Transverse colon (tissue), 4 donors: ENCODE measurements at regions of chr16 and their contacts with region 1.

Region 1: DNA sequence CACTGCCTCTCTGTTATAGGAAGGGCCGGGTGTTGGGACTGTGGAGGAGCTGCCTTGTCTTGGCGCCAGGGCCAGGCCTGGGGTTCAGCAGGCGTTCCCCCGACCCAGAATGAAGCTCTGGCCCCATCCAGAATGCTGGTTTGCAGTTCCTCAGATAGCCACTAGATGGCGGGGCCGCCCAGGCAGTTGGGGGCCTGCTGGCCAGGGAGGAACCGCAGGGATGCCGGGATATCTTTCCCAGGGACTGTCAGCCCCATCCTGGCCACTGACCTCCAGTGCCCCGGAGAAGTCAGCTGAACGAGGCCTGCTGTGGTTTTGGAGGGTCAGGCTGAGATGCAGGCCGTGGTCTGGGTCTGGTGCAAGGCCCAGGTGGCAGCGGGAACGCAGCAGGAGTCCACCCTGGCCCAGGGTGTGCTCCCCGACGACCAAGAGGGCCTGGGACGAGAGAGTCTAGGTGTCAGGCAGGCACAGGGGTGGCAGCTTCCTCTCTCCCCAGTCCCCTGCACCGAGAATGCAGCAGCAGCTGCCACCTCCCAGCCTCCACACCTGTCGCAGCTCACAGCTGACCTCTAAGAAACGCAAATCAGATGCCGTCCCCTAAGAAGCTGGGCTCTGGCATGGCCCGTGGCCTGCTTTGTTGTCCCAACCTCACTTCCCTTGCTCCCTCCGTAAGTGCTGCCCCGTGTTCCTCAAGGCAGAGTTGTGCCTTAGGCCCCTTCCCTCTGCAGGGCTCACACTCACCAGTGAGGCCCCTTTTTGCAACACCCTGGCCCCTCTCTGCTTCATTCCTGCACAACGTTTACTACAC is 51.2 kb downstream of the RMI2 start:
- DNase-seq: peak; percentile 68
- H3K4me3 ChIP-seq: no peak overlapping the region
- H3K27ac ChIP-seq: no peak overlapping the region
- H3K4me1 ChIP-seq: no peaks in the 10 kb centered on the region
- H3K27me3 ChIP-seq: no peaks in the 10 kb centered on the region
- CTCF ChIP-seq: peak; percentile 96 to 99 (median 99)
- EP300 ChIP-seq: no peak
- POLR2A ChIP-seq: no peak

Region 2: GRCh38 chr16:11121914-11122692 is 274.3 kb before region 1 on chr16:
- in situ Hi-C with region 1: no loop called
- intact Hi-C with region 1: no loop called
- DNase-seq: no peak
- H3K4me3 ChIP-seq: no peak overlapping the region
- H3K27ac ChIP-seq: peak overlapping the region in 1 of 4 donors; percentile 22
- H3K4me1 ChIP-seq: peaks cover 0 to 7% (median 0%) of the 10 kb centered on the region in 4 donors
- H3K27me3 ChIP-seq: no peaks in the 10 kb centered on the region
- CTCF ChIP-seq: no peak
- EP300 ChIP-seq: no peak
- POLR2A ChIP-seq: no peak

Region 3: DNA sequence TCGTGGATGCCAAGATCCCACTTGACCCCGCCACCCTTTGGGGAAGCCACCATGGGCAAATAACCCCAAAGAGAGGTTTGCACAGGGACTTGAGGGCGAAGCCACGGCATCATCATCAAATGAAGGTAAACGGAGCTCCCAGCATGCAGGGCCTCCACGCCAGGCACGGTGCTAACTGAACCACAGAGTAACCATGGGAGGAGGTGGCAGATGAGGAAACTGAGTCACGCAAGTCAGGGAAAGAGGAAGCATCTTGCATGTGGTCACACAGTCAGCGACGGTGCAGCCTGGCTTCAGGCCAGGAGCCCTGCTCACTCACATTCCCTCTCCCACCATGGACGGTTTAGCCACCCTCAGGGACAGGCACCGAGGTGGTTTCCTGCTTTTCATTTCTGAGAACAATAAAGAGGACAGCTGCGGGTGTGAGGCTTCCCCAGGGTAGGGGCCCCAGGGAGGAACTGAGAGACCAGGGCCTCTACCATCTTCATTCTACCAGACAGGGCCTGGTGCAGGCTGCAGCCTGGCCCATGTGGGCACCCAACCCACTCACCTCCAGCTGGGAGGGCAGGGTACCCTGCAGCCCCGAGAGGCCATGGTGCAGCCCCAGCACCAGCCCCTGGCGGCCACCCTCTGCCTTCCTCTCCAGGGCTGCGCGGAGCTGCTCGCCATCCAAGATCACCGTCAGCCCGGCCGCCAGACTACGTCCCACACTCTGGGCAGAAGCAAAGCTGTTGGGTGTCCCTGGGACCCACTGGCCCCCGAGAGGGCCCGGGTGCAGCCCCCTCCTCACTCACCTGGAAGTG is 27.1 kb after region 1 on chr16:
- in situ Hi-C with region 1: no loop called
- intact Hi-C with region 1: no loop called
- DNase-seq: no peak
- H3K4me3 ChIP-seq: no peak overlapping the region
- H3K27ac ChIP-seq: no peak overlapping the region
- H3K4me1 ChIP-seq: no peaks in the 10 kb centered on the region
- H3K27me3 ChIP-seq: no peaks in the 10 kb centered on the region
- CTCF ChIP-seq: no peak
- EP300 ChIP-seq: no peak
- POLR2A ChIP-seq: no peak

Region 4: GRCh38 chr16:11526655-11527350 is 130.4 kb after region 1 on chr16:
- in situ Hi-C with region 1: loop called in 2 of 4 experiments (anchors 10 kb)
- intact Hi-C with region 1: no loop called
- DNase-seq: no peak
- H3K4me3 ChIP-seq: no peak overlapping the region
- H3K27ac ChIP-seq: no peak overlapping the region
- H3K4me1 ChIP-seq: no peaks in the 10 kb centered on the region
- H3K27me3 ChIP-seq: peaks cover 6% of the 10 kb centered on the region
- CTCF ChIP-seq: no peak
- EP300 ChIP-seq: no peak
- POLR2A ChIP-seq: no peak

Region 5: GRCh38 chr16:11706180-11706742 is 309.8 kb after region 1 on chr16:
- in situ Hi-C with region 1: loop called in 2 of 4 experiments (anchors 25 kb)
- intact Hi-C with region 1: no loop called
- DNase-seq: peak; percentile 50
- H3K4me3 ChIP-seq: no peak overlapping the region
- H3K27ac ChIP-seq: peak overlapping the region in 1 of 4 donors; percentile 6
- H3K4me1 ChIP-seq: no peaks in the 10 kb centered on the region
- H3K27me3 ChIP-seq: no peaks in the 10 kb centered on the region
- CTCF ChIP-seq: no peak
- EP300 ChIP-seq: no peak
- POLR2A ChIP-seq: no peak

Region 6: GRCh38 chr16:11715246-11715947 is 319.0 kb after region 1 on chr16:
- in situ Hi-C with region 1: loop called in 2 of 4 experiments (anchors 25 kb)
- intact Hi-C with region 1: loop called (anchors 5 kb)
- DNase-seq: no peak
- H3K4me3 ChIP-seq: no peak overlapping the region
- H3K27ac ChIP-seq: no peak overlapping the region
- H3K4me1 ChIP-seq: peaks cover 0 to 28% (median 2%) of the 10 kb centered on the region in 4 donors
- H3K27me3 ChIP-seq: no peaks in the 10 kb centered on the region
- CTCF ChIP-seq: no peak
- EP300 ChIP-seq: no peak
- POLR2A ChIP-seq: no peak

Region 7: DNA sequence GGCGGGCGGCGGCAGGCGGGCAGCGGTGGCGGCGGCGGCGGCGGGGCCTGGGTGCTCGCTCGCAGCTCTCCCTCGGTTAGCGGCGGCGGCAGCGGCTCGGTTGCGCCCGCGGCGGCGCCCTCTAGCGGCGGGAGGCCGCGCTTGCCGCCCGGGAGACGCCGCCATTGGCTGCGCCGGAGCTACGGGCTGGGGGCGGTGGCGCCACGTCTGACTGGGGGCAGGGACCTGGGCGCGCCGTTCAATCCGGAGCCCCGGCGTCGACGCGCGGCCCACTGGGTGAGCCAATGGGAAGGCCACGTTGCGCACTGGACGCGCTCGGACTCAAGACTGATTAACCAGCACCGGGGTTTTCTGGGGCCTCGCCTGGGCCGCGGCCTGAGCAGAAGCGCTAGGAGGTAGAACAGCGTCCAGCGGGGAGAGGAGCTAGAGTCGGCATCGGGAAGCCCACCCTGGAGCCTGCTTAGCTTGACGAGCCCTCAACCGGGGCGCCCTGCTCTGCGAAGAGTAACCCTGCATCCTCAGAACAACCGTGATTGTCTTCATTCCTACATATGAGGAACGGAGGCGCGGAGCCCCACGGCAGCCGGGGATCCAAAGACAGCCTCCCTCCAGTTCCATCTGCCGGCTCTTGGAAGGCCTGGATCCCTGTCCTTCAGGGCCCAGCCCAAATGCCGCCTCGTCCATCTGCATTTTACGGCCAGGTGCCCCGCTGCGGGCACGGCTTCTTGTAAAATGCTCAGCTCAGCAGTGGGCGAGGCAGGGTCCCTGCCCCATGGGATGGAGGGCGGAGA is 400.9 kb after region 1 on chr16 and contains the start of gene ZC3H7A:
- in situ Hi-C with region 1: loop called in 2 of 4 experiments (anchors 25 kb)
- intact Hi-C with region 1: no loop called
- DNase-seq: peak; percentile 97
- H3K4me3 ChIP-seq: peak within 1 kb of the TSS; percentile 79 to 95 (median 90)
- H3K27ac ChIP-seq: peak within 1 kb of the TSS; percentile 95 to 100 (median 97)
- H3K4me1 ChIP-seq: peaks cover 32 to 66% (median 49%) of the 10 kb centered on the region in 4 donors
- H3K27me3 ChIP-seq: no peaks in the 10 kb centered on the region
- CTCF ChIP-seq: peak; percentile 33 to 84 (median 66)
- EP300 ChIP-seq: no peak
- POLR2A ChIP-seq: peak; percentile 98
- total RNA-seq, gene ZC3H7A: 38.1 to 92.0 (median 63.3) TPM

Region 8: DNA sequence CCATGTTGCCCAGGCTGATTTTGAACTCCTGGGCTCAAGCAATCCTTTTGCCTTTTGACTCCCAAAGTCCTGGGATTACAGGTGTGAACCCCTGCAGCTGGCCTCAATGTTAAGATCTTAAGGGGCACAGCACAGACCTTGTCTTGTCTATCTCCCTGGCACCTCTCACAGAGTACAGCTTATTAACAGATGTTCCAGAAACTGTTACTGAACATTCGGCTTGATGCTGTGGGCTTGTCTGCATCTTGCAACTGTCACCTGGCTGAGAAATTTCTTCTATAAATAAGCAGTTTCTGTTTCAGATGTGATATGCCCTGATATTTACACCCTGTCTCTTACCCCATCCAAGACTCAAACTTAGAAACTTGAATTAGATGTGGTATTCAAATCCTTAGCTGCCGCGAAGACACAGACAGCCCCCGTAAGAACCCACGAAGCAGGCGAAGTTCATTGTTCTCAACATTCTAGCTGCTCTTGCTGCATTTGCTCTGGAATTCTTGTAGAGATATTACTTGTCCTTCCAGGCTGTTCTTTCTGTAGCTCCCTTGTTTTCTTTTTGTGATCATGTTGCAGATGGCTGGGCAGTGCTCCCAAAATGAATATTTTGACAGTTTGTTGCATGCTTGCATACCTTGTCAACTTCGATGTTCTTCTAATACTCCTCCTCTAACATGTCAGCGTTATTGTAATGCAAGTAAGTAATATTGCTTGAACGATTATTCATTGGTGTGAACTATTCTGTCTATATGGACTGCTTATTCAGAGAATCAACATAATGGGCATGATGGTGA is 568.5 kb after region 1 on chr16 and contains the start of gene TNFRSF17:
- in situ Hi-C with region 1: no loop called
- intact Hi-C with region 1: loop called (anchors 10 kb)
- DNase-seq: peak; percentile 13
- H3K4me3 ChIP-seq: no peak within 1 kb of the TSS
- H3K27ac ChIP-seq: peak within 1 kb of the TSS in 2 of 4 donors; percentile 35 to 53
- H3K4me1 ChIP-seq: no peaks in the 10 kb centered on the region
- H3K27me3 ChIP-seq: no peaks in the 10 kb centered on the region
- CTCF ChIP-seq: no peak
- EP300 ChIP-seq: no peak
- POLR2A ChIP-seq: no peak
- total RNA-seq, gene TNFRSF17: 1.2 to 6.0 TPM in 2 of 4 donors, not detected in the others

Region 9: DNA sequence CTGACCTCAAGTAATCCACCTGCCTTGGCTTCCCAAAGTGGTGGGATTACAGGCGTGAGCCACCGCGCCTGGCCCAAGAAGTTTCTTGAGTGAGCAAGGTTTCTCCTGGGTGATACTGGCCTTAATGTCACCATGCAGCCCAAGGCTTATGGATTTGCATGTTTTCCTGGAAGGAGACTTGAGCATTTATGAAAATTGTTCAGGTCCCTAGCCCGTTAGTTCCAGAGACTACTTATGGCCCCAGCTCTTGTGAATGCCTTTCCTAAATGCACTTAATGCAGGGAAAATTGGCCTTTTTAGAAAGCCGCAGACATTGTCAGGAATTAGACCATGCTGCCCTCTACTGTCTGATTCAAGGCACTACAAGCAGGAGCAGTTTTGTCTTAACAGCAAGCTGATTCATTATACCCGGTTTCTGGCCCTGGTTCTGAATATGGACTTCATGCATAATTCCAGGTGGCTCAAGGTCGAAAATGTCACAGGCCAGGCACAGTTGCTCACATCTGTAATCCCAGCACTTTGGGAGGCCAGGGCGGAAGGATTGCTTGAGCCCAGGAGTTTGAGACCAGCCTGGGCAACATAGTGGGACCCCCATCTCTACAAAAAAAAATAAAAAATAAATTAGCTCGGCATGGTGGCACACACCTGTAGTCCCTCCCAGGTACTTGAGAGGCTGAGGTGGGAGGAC is 671.4 kb after region 1 on chr16:
- in situ Hi-C with region 1: loop called in 1 of 4 experiments (anchors 25 kb)
- intact Hi-C with region 1: loop called (anchors 5 kb)
- DNase-seq: peak; percentile 62
- H3K4me3 ChIP-seq: no peak overlapping the region
- H3K27ac ChIP-seq: no peak overlapping the region
- H3K4me1 ChIP-seq: peaks cover 0 to 2% (median 0%) of the 10 kb centered on the region in 4 donors
- H3K27me3 ChIP-seq: no peaks in the 10 kb centered on the region
- CTCF ChIP-seq: peak; percentile 89 to 95 (median 92)
- EP300 ChIP-seq: no peak
- POLR2A ChIP-seq: no peak